ENCODE measurements at regions of chr11 and their contacts with region 1.

Region 1: GRCh38 chr11:31995525-31996094 is 95.3 kb upstream of the RCN1 start:
- H3K4me3 ChIP-seq: no peak overlapping the region
- H3K27ac ChIP-seq: no peak overlapping the region
- H3K4me1 ChIP-seq: no peaks in the 10 kb centered on the region
- CTCF ChIP-seq: no peak

Region 2: DNA sequence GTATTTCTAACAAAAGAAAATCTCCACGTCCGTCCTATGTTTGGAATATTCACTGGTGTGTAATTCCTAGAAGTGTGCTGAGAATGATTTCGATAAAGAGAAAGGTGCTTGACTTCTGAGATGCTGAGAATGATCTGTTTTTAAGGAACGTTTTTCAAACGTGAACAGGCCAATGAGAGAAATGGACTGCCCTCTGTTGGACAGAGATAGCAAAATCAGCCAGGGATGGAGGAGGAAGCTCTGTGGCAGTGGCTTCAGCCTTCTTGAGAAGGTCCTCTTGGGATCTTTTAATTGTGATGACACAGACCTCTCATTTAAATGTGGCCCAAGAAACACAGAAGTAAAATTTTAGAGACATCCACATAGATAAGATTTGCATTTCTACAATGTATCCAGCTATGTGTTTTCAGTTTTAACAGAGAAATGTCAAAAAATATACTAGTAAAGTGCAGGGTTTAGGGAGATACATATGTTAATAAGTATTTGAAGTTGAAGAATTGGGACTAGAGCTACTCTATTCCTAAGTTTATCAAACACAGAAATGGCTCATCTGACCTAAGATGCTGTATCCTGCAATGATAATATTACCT is 11.3 kb after region 1 on chr11:
- CTCF ChIA-PET with region 1: interaction called, 12 read pairs
- POLR2A ChIA-PET with region 1: no interaction called
- H3K4me3 ChIP-seq: no peak overlapping the region
- H3K27ac ChIP-seq: no peak overlapping the region
- H3K4me1 ChIP-seq: no peaks in the 10 kb centered on the region
- CTCF ChIP-seq: no peak